Activated CD4-positive, alpha-beta T cell treated with anti-CD3 and anti-CD28 coated beads for 36 hours (primary cell): ENCODE measurements at regions of chr11 and their contacts with region 1.

Region 1: DNA sequence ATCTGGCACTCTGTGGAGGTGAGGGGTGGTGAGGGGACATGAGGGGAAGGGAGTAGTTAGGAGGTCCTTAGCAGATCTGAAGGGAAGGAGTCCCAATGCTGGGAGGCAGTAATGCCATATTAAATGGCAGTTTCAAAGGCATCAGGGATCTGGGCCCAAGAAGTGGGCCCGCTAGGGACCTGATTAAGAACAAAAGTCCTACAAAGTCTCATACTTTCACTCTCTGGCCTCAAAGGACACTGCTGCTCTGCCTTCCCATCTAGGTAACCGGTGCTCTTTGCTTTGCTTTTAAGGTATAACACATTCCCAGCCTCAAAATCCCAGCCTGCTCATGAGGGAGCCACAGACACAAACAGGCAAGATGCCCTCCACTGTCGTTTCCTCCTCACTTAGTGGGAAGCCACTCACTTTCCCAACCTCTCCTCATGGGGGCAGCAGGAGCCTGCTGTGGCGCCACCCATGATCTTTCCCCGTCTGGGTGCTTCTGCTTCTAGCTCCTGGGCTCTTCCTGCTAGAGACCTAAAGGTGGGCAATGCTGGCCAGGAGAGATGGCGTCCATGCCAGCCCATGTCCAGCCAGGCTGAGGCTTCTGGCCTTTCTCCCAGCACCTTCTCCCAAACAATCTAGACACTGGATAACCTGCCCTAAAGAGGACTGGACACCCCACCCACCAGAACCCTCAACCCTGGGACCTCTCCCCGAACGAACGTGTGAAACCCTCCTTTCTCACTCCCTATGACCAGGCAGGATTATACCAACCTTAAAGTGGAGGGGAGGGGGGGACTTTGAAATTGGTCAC is 68.3 kb downstream of the PLEKHA7 start:
- DNase-seq: peak; percentile 74
- ATAC-seq: peak; percentile 93
- H3K4me3 Mint-ChIP-seq: no peak overlapping the region
- H3K27ac Mint-ChIP-seq: no peak overlapping the region
- H3K4me1 Mint-ChIP-seq: peaks cover 11% of the 10 kb centered on the region
- H3K27me3 Mint-ChIP-seq: no peaks in the 10 kb centered on the region

Region 2: DNA sequence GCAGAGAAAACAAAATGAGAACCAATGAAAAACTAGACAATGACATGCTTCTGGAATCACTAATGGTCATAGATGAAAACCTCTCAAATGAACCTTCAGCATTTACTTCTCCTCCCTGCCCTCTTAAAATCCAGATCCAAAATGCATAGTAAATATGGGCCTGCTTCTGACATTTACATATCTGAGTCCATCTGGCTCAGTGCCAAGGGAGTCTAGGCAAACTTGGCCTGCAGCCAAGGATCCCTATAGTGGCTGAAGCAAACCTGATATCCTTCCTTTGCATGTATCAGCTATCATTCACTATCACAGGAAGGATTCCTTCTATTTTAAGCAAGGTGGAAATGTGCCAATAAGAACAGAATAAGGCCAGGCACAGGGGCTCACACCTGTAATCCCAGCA is 102.6 kb before region 1 on chr11:
- CTCF ChIA-PET with region 1: no interaction called
- POLR2A ChIA-PET with region 1: no interaction called
- intact Hi-C with region 1: no loop called
- DNase-seq: no peak
- ATAC-seq: no peak
- H3K4me3 Mint-ChIP-seq: no peak overlapping the region
- H3K27ac Mint-ChIP-seq: no peak overlapping the region
- H3K4me1 Mint-ChIP-seq: no peaks in the 10 kb centered on the region
- H3K27me3 Mint-ChIP-seq: no peaks in the 10 kb centered on the region

Region 3: DNA sequence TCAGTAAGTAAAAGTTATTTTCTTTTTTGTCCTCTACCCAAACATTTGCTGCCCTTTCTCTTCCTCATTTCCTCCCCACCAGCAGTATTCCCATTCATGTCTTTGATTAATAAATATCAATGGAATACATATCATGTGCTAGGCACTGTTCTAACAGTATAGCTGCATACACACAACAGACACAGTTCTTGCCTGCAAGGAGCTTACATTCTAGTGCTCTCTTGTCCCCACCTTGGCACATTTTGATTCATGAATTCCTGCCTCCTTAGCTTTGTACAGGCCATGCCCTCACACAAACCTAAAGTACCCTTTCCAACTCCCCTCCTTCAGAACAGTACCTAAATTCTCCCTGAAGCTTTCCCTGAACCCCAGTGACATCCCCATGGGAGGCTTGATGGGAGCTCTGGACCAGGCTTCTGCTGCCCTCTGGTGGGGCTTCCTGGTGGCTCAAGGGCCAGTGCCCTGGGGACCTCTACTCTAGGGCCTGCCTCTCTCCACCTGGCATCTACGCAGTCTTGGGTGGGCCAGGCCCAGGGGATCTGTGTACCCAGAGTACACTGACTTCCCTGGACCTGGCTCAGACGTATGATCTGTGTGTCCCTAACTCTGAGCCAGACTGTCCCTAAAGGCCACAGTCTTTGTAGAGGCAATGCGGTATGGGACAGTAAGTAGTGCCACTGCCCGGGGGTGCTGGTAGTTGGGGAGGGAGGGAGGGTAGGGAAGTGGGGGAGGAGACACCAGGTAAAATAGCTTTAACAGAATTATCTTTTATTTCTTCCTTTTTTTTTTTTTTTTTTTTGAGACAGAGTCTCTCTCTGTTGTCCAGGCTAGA is 117.5 kb after region 1 on chr11:
- CTCF ChIA-PET with region 1: interaction called, 22 read pairs
- POLR2A ChIA-PET with region 1: no interaction called
- intact Hi-C with region 1: loop called (anchors 1 kb)
- DNase-seq: peak; percentile 80
- ATAC-seq: peak; percentile 89
- H3K4me3 Mint-ChIP-seq: no peak overlapping the region
- H3K27ac Mint-ChIP-seq: no peak overlapping the region
- H3K4me1 Mint-ChIP-seq: no peaks in the 10 kb centered on the region
- H3K27me3 Mint-ChIP-seq: no peaks in the 10 kb centered on the region

Region 4: DNA sequence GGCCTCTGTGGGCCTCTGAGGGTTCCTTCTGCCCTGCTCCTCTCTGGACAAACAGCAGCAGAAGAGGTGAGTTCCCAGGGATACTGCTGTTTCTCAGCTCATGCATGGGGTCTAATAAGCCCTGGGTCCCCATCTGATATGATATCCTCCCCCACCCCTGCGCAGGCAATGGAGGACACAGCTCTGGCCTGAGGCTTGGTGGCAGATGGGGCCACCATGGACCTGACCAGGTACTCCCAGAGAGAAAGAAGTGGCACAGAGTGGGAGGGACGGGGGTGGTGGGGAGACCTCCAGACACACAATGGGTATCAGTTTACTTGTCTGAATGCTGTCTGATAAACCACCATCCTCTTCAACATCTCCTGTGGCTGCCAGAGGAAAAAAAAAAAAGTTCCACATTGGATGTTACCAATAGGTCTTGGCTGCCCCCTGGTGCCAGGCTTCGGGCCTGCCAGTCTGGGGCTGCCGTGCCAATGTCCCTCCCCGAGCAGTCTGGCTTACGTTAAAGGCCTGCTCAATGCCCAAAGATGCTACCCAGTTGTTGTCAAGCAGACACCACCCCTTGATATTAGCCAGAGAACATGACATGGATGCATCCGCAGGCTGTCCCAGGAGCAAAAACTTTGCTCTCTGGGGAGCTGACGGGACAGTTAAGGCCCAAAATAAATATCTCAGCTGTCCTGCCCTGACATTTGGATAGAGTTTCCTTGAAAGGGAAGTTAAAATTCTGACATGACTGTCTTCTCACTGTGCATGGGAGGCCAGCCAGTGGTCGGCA is 558.6 kb after region 1 on chr11:
- CTCF ChIA-PET with region 1: no interaction called
- POLR2A ChIA-PET with region 1: no interaction called
- intact Hi-C with region 1: loop called (anchors 10 kb)
- DNase-seq: peak; percentile 88
- ATAC-seq: peak; percentile 90
- H3K4me3 Mint-ChIP-seq: no peak overlapping the region
- H3K27ac Mint-ChIP-seq: no peak overlapping the region
- H3K4me1 Mint-ChIP-seq: no peaks in the 10 kb centered on the region
- H3K27me3 Mint-ChIP-seq: peaks cover 7% of the 10 kb centered on the region